Activated CD4-positive, alpha-beta memory T cell treated with anti-CD3 and anti-CD28 coated beads for 36 hours (primary cell): ENCODE measurements at regions of chr11 and their contacts with region 1.

Region 1: DNA sequence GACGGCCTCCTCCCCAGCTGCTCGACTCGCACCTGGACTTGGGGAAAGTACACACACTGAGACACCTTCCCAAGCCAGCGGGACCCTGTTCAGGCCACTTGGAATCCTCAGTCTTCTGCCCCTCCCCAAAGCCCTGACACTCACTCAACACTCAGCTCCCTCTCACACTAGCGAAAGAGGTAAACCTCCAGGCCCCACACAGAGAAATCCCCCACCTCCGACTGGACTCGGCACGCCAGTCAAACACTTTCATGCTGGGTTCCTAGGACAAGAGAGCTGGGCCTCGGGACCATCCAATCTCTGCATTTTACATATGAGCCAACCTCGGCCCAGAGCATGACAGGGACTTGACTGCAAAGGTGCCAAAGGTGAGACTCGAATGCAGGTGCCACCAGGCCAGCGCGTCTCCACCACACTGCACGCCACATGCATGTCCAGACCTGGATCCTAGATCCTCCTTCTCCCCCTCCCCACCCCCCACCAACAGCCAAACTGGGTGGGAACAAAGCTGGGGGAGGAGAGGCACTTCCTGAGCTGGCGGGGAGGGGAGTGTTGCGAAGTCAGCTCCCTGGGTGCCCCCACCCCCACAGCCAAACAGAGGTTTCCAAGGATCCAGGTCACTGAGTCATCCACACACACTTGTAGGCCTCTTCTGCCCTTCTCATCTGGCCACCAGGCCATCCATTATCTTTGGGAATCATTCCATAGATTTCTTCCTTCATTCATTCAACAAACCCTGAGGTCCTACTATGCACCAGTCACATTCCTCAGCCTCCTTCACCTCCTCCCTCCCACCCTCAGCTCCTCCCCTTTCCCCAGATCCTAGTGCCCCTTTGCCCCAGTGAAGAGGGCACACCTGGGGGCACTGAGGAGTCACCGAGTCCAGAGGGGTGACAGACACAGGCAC is 10.7 kb upstream of the CD5 start:
- DNase-seq: peak; percentile 85
- H3K4me3 Mint-ChIP-seq: peak overlapping the region; percentile 96
- H3K27ac Mint-ChIP-seq: peak overlapping the region; percentile 99
- H3K4me1 Mint-ChIP-seq: peaks cover 72% of the 10 kb centered on the region
- H3K27me3 Mint-ChIP-seq: no peaks in the 10 kb centered on the region

Region 2: DNA sequence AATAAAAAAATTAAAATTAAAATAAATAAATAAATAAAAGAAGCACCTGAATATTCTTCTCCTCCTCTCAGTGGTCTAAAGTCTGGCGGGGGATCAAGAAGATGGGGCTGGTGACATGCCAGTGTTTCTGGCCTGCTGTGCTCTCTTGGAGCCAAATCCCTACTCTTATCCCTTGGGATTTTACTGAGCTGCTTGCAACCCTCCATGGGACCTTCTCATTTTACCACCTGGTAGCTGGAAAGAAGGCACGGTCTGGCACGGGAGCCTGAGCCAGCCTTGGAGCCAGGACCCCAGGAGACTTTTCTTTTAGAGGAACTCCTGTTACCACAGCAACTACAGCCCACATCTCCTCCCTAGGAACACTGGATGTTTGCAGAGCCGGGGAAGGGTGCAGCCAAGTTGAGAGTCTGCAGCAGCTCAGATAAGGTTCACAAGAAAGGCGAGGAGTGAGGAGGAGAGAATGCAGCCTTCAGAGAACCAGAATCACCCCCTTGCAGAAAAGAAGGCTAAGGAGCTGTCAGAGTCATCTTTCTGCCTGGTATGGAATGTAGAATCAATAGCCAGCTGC is 98.7 kb before region 1 on chr11:
- CTCF ChIA-PET with region 1: no interaction called
- POLR2A ChIA-PET with region 1: interaction called, 46 read pairs
- intact Hi-C with region 1: no loop called
- DNase-seq: peak; percentile 19
- H3K4me3 Mint-ChIP-seq: peak overlapping the region; percentile 68
- H3K27ac Mint-ChIP-seq: peak overlapping the region; percentile 97
- H3K4me1 Mint-ChIP-seq: peaks cover 81% of the 10 kb centered on the region
- H3K27me3 Mint-ChIP-seq: no peaks in the 10 kb centered on the region

Region 3: DNA sequence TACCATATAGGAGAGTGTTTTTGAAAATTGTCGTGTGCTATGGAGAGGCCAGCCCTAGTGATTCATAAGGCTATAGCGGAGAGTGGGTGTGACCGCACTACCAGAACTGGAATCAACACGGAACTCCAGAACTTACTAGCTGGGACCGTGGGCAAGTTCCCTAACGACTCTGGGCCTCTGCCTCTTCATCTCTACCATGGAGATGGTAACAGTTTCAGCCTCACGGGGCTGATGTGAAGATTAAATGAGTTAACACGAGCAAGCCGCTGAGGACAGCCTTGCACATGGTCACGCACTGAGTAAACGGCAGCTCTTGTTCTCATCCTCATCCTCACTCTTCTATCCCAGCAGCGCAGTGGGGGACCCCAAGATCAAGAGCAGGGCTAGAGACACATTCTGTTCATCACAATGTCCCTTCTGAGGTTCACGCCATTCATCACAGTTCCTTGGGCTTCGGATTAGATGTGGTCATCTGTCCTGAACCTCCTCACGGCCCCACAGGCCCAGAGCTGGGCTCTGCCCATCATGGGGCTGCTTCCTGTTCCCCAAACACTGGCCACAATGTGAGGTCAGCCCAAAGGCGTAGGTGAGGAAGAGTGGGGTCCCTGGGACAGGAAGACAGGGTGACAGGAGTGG is 36.6 kb before region 1 on chr11:
- CTCF ChIA-PET with region 1: no interaction called
- POLR2A ChIA-PET with region 1: interaction called, 33 read pairs
- intact Hi-C with region 1: no loop called
- DNase-seq: peak; percentile 88
- H3K4me3 Mint-ChIP-seq: peak overlapping the region; percentile 46
- H3K27ac Mint-ChIP-seq: peak overlapping the region; percentile 95
- H3K4me1 Mint-ChIP-seq: peaks cover 89% of the 10 kb centered on the region
- H3K27me3 Mint-ChIP-seq: no peaks in the 10 kb centered on the region

Region 4: GRCh38 chr11:61102667-61103571 is 11.3 kb after region 1 on chr11:
- CTCF ChIA-PET with region 1: interaction called, 7 read pairs
- POLR2A ChIA-PET with region 1: interaction called, 47 read pairs
- intact Hi-C with region 1: loop called (anchors 1 kb)
- DNase-seq: peak; percentile 51
- H3K4me3 Mint-ChIP-seq: no peak overlapping the region
- H3K27ac Mint-ChIP-seq: no peak overlapping the region
- H3K4me1 Mint-ChIP-seq: peaks cover 28% of the 10 kb centered on the region
- H3K27me3 Mint-ChIP-seq: no peaks in the 10 kb centered on the region

Region 5: DNA sequence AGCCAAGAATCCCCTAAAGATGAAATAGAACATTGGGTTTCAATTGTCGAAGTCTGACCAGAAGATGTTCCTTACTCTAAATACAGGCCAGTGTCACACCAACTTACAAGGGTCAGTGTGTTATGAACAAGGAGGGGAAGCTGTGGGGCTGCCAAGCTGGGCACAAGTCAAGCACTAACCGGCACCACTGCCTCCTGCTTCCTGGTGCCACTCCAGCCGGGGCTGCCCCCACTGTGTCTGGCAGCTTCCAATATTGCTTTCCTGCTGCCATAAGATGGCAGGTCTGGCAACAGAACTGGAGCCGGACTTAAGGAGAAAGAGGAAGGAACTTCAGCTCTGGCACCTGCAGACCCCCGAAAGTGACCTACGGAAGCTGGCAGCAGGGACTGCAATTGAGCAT is 83.3 kb after region 1 on chr11:
- CTCF ChIA-PET with region 1: no interaction called
- POLR2A ChIA-PET with region 1: no interaction called
- intact Hi-C with region 1: no loop called
- DNase-seq: no peak
- H3K4me3 Mint-ChIP-seq: no peak overlapping the region
- H3K27ac Mint-ChIP-seq: no peak overlapping the region
- H3K4me1 Mint-ChIP-seq: peaks cover 11% of the 10 kb centered on the region
- H3K27me3 Mint-ChIP-seq: peaks cover 2% of the 10 kb centered on the region